Activated B cell treated with CpG ODN at 0.5 μM for 24 hours (primary cell): ENCODE measurements at regions of chr2 and their contacts with region 1.

Region 1: GRCh38 chr2:100248971-100249490 is 73.3 kb downstream of the LONRF2 start:
- DNase-seq: no peak
- ATAC-seq: no peak
- H3K4me3 Mint-ChIP-seq: peak overlapping the region; percentile 7
- H3K27ac Mint-ChIP-seq: peak overlapping the region; percentile 74
- H3K4me1 Mint-ChIP-seq: peaks cover 78% of the 10 kb centered on the region
- H3K27me3 Mint-ChIP-seq: peaks cover 1% of the 10 kb centered on the region
- CTCF ChIP-seq: no peak

Region 2: DNA sequence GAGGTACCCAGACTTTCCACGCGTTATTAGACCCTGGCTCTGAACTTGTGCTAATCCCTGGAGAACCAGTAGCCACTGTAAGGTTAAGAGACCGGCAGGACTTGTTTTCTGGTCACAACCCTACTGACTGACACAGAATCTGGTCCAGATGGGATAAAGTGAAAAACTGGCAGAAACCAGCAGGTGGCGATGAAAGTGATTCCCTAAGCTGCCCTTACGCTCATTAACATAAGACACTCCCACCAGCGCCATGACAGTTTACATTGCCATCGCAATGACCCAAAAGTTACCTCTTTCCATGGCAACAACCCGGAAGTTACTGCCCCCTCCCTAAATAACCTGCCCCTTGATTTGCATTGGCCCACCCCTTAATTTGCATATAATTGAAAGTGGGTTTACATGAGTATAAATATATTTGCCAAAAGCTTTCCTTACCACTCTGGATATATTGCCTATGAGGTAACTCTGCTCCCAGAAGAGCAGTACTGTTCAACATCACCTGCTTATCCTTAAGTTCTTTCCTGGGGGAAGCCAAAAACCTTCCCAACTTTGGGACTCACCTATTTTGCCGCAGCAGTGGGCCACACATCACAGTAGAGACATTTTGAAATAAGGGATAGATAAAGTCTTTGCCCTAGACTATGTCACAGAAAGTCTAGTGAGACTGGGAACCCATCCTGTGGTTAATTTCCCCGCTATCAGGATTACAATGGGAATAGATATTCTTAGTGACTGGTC is 70.8 kb before region 1 on chr2:
- CTCF ChIA-PET with region 1: no interaction called
- POLR2A ChIA-PET with region 1: interaction called, 17 read pairs
- intact Hi-C with region 1: no loop called
- DNase-seq: no peak
- ATAC-seq: peak; percentile 84
- H3K4me3 Mint-ChIP-seq: no peak overlapping the region
- H3K27ac Mint-ChIP-seq: peak overlapping the region; percentile 24
- H3K4me1 Mint-ChIP-seq: peaks cover 17% of the 10 kb centered on the region
- H3K27me3 Mint-ChIP-seq: no peaks in the 10 kb centered on the region
- CTCF ChIP-seq: no peak